Activated CD4-positive, alpha-beta T cell treated with anti-CD3 and anti-CD28 coated beads, Interleukin-2, amount 10 ng/mL, durations not matched to agents 24 days and 14 days (primary cell): ENCODE measurements at regions of chr3 and their contacts with region 1.

Region 1: DNA sequence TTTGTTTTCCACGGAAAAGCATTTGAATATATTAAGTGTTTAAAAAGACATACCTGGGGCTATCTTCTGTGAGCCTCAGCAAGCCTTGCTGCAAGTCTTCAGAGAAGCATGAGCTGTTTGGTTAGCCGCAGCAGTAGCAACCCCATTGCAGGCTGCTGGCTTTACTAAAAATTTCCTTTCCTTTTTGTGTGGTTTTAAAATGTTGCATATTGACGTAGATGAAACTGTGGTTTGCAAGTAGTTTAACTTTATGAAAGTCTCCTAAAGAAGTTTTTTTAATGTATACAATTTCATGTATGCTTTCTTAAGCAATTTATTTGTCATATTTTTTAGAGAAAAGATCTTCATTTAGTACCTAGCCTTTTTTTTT is at the start of gene GPR171:
- DNase-seq: peak; percentile 93
- H3K4me3 Mint-ChIP-seq: peak within 1 kb of the TSS; percentile 89
- H3K27ac Mint-ChIP-seq: peak within 1 kb of the TSS; percentile 99
- H3K4me1 Mint-ChIP-seq: peaks cover 52% of the 10 kb centered on the region
- H3K27me3 Mint-ChIP-seq: no peaks in the 10 kb centered on the region
- total RNA-seq, gene GPR171: 159 and 164 TPM in 2 replicates

Region 2: GRCh38 chr3:150546226-150547044 is 656.6 kb before region 1 on chr3 and contains the starts of genes EIF2A and SERP1:
- intact Hi-C with region 1: loop called (anchors 2 kb)
- DNase-seq: peak; percentile 100
- H3K4me3 Mint-ChIP-seq: peak within 1 kb of the TSS; percentile 90
- H3K27ac Mint-ChIP-seq: peak within 1 kb of the TSS; percentile 95
- H3K4me1 Mint-ChIP-seq: peaks cover 51% of the 10 kb centered on the region
- H3K27me3 Mint-ChIP-seq: no peaks in the 10 kb centered on the region
- total RNA-seq, gene EIF2A: 125 and 133 TPM in 2 replicates
- total RNA-seq, gene SERP1: 88.8 and 103 TPM in 2 replicates

Region 3: DNA sequence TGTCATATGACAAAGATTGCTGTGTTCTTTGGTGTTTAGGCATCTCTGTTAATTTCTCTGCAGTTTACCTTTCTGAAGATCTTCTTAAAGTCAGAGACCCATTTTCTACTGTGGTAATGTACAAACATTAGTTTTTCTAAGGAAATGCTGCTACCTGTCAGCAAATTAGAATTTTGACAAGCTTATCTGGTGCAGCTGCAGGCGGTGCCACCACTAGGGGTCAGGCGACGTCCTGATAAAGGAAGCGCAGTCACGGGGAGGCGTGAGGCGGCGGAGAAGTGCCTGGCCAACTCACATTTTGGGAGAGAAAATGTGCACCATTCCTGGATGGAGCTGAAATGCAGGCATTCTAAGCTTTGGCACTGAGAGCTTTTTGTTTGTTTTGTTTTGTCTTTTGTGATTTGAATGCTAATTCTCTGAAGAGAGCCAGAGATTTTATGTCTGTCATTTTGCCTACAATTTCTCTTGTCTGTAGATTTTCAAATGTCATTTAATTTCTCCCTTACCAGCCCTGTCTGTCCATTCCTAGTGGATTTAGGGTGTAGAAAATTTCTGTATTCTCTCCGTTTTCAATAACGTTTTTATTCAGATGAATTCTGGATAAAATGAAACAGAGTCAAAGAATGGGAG is 415.2 kb before region 1 on chr3:
- intact Hi-C with region 1: loop called (anchors 5 kb)
- DNase-seq: peak; percentile 92
- H3K4me3 Mint-ChIP-seq: peak overlapping the region; percentile 2
- H3K27ac Mint-ChIP-seq: peak overlapping the region; percentile 39
- H3K4me1 Mint-ChIP-seq: peaks cover 39% of the 10 kb centered on the region
- H3K27me3 Mint-ChIP-seq: peaks cover 4% of the 10 kb centered on the region

Region 4: DNA sequence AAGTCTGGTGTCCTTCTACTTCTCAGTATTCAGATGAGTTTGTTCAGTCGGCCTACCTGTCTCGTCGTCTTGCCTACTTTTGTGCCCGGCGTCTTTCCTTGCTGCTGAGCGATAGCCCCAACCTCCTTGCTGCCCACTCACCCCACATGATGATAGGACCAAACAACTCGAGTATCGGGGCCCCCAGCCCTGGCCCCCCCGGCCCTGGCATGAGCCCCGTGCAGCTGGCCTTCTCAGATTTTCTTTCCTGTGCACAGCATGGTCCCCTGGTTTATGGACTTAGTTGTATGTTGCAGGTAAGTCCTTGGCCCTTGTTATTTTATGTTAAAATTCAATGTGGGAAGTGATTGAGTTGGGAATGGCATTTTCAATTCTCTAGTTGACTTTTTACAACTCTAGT is 43.2 kb before region 1 on chr3:
- intact Hi-C with region 1: no loop called
- DNase-seq: no peak
- H3K4me3 Mint-ChIP-seq: no peak overlapping the region
- H3K27ac Mint-ChIP-seq: no peak overlapping the region
- H3K4me1 Mint-ChIP-seq: no peaks in the 10 kb centered on the region
- H3K27me3 Mint-ChIP-seq: peaks cover 18% of the 10 kb centered on the region

Region 5: DNA sequence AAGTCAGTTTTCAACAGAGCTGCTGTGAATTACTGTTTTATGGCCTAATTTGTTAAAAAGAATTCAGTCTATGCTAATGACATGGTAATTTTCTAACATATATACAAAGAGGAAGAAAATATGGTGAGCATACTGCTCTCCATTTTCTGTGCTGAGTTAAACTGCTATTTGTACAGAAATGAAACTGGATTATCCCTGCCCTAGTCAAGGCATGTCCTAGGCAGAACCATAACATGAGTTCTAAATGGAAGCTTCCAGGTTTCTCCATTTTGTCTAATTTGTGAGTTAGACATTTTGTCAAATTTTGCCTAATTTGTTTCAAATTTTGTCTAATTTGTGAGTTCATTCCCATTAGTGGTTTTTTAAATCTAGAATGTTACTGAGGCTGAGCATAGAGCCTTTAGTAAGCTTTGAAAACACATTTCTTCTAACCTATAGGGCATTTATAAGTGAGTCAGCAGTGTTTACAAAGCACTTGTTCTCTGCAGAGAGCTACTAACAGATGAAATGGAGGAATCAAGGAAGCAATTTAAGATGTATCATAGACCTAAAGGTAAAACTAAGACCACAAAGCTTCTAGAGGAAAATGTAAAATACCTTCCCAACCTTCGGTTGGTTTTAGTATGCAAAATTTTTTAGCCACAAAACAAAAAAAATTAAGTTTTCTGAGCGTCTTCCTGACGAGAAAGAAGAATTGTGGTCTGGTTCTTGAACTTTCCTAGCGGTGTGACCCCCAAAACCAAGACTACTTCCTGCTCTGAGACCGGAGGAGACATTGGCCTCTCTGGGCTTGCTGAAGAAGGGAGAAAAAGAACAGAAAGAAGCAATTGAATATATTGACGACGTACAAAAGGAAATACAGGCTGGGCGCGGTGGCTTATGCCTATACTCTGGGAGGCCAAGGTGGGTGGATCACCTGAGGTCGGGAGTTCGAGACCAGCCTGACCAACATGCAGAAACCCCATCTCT is 65.5 kb after region 1 on chr3:
- intact Hi-C with region 1: loop called (anchors 1 kb)
- DNase-seq: peak; percentile 89
- H3K4me3 Mint-ChIP-seq: peak overlapping the region; percentile 72
- H3K27ac Mint-ChIP-seq: peak overlapping the region; percentile 91
- H3K4me1 Mint-ChIP-seq: peaks cover 38% of the 10 kb centered on the region
- H3K27me3 Mint-ChIP-seq: peaks cover 2% of the 10 kb centered on the region

Region 6: GRCh38 chr3:152258448-152259393 is 1055.7 kb after region 1 on chr3:
- intact Hi-C with region 1: loop called (anchors 5 kb)
- DNase-seq: peak; percentile 89
- H3K4me3 Mint-ChIP-seq: peak overlapping the region; percentile 79
- H3K27ac Mint-ChIP-seq: peak overlapping the region; percentile 97
- H3K4me1 Mint-ChIP-seq: peaks cover 75% of the 10 kb centered on the region
- H3K27me3 Mint-ChIP-seq: no peaks in the 10 kb centered on the region